Transverse colon (tissue), 4 donors: ENCODE measurements at regions of chr3 and their contacts with region 1.

Region 1: DNA sequence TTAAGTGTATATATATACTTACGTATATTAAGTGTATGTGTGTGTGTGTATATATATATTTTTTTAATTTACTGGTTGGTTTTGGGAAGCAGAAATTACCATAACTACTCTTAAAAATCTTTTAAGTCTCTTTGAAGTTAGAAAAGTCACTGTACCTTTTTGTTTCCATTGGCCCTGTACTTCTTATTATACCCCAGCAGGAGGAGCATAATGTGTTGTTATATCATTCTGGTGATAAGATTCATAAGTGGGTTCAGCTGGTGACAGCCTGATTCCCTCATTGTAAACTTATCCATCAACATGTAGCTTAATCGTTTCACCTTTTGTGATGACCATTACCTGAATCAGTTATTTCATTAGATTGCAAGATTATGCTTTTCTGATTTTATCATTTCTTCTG is 30.8 kb downstream of the MLH1 start:
- DNase-seq: no peak
- H3K4me3 ChIP-seq: no peak overlapping the region
- H3K27ac ChIP-seq: no peak overlapping the region
- H3K4me1 ChIP-seq: no peaks in the 10 kb centered on the region
- H3K27me3 ChIP-seq: no peaks in the 10 kb centered on the region
- CTCF ChIP-seq: peak; percentile 22 to 48 (median 40)
- EP300 ChIP-seq: no peak
- POLR2A ChIP-seq: no peak

Region 2: GRCh38 chr3:37210230-37210629 is 186.1 kb after region 1 on chr3:
- in situ Hi-C with region 1: loop called (anchors 10 to 25 kb)
- intact Hi-C with region 1: no loop called
- DNase-seq: no peak
- H3K4me3 ChIP-seq: no peak overlapping the region
- H3K27ac ChIP-seq: no peak overlapping the region
- H3K4me1 ChIP-seq: peaks cover 0 to 7% (median 0%) of the 10 kb centered on the region in 4 donors
- H3K27me3 ChIP-seq: no peaks in the 10 kb centered on the region
- CTCF ChIP-seq: no peak
- EP300 ChIP-seq: no peak
- POLR2A ChIP-seq: no peak

Region 3: GRCh38 chr3:37221407-37221806 is 197.3 kb after region 1 on chr3:
- in situ Hi-C with region 1: loop called (anchors 10 to 25 kb)
- intact Hi-C with region 1: no loop called
- DNase-seq: no peak
- H3K4me3 ChIP-seq: no peak overlapping the region
- H3K27ac ChIP-seq: no peak overlapping the region
- H3K4me1 ChIP-seq: no peaks in the 10 kb centered on the region
- H3K27me3 ChIP-seq: no peaks in the 10 kb centered on the region
- CTCF ChIP-seq: no peak
- EP300 ChIP-seq: no peak
- POLR2A ChIP-seq: no peak